ENCODE measurements at regions of chr9 and their contacts with region 1.

Region 1: GRCh38 chr9:19456996-19457692 is 48.3 kb downstream of the ACER2 start:
- DNase-seq: peak; percentile 18 to 70 (median 57)
- ATAC-seq: peak; percentile 92
- H3K4me3 ChIP-seq: no peak overlapping the region
- H3K4me3 Mint-ChIP-seq: peak overlapping the region in 7 of 10 donors; percentile 9 to 68 (median 48)
- H3K27ac ChIP-seq: no peak overlapping the region
- H3K27ac Mint-ChIP-seq: peak overlapping the region in 1 of 9 donors; percentile 22
- H3K4me1 ChIP-seq: peaks cover 0 to 9% of the 10 kb centered on the region in 2 donors
- H3K4me1 Mint-ChIP-seq: peaks cover 7 to 12% (median 8%) of the 10 kb centered on the region in 7 donors
- H3K27me3 ChIP-seq: no peaks in the 10 kb centered on the region
- H3K27me3 Mint-ChIP-seq: peaks cover 0 to 8% (median 0%) of the 10 kb centered on the region in 5 donors

Region 2: DNA sequence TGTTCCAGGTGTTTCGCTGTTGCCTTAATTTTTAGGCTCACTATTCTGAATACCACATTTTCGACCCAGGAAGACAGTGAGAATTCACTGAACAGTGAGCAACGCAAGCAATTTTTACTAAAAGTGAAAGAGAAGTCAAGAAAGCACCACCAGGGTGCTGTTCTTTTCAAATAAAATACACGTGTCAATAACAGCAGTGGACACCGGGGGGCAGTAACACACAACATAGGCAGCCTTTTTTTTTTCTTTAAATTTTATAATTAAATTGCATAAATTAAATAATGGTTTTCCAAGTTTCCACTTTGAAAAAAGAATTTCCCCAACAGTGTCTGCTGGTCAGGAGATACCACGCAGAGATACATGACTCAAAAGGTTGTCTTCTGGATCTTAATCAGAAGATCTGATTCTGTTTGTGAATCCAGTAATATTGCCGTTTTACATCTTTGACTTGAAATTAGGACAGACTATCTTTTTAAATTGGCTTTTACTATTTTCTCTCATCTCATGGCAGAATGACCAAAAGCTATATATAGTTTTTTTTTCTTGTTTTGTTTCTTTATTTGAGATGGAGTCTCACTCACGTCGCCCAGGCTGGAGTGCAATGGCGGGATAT is 1925.4 kb before region 1 on chr9:
- CTCF ChIA-PET with region 1: no interaction called
- POLR2A ChIA-PET with region 1: no interaction called
- intact Hi-C with region 1: loop called in 1 of 2 experiments (anchors 10 kb)
- DNase-seq: no peak
- ATAC-seq: no peak
- H3K4me3 ChIP-seq: no peak overlapping the region
- H3K4me3 Mint-ChIP-seq: no peak overlapping the region
- H3K27ac ChIP-seq: no peak overlapping the region
- H3K27ac Mint-ChIP-seq: no peak overlapping the region
- H3K4me1 ChIP-seq: no peaks in the 10 kb centered on the region
- H3K4me1 Mint-ChIP-seq: peaks cover 0 to 3% (median 0%) of the 10 kb centered on the region in 7 donors
- H3K27me3 ChIP-seq: no peaks in the 10 kb centered on the region
- H3K27me3 Mint-ChIP-seq: no peaks in the 10 kb centered on the region

Region 3: GRCh38 chr9:19028835-19029451 is 428.2 kb before region 1 on chr9:
- CTCF ChIA-PET with region 1: no interaction called
- POLR2A ChIA-PET with region 1: no interaction called
- intact Hi-C with region 1: loop called (anchors 1 to 2 kb)
- DNase-seq: peak in 5 of 9 donors; percentile 17 to 37 (median 34)
- ATAC-seq: peak; percentile 54
- H3K4me3 ChIP-seq: no peak overlapping the region
- H3K4me3 Mint-ChIP-seq: no peak overlapping the region
- H3K27ac ChIP-seq: no peak overlapping the region
- H3K27ac Mint-ChIP-seq: no peak overlapping the region
- H3K4me1 ChIP-seq: no peaks in the 10 kb centered on the region
- H3K4me1 Mint-ChIP-seq: peaks cover 0 to 8% (median 0%) of the 10 kb centered on the region in 7 donors
- H3K27me3 ChIP-seq: no peaks in the 10 kb centered on the region
- H3K27me3 Mint-ChIP-seq: peaks cover 11 to 19% (median 13%) of the 10 kb centered on the region in 5 donors

Region 4: DNA sequence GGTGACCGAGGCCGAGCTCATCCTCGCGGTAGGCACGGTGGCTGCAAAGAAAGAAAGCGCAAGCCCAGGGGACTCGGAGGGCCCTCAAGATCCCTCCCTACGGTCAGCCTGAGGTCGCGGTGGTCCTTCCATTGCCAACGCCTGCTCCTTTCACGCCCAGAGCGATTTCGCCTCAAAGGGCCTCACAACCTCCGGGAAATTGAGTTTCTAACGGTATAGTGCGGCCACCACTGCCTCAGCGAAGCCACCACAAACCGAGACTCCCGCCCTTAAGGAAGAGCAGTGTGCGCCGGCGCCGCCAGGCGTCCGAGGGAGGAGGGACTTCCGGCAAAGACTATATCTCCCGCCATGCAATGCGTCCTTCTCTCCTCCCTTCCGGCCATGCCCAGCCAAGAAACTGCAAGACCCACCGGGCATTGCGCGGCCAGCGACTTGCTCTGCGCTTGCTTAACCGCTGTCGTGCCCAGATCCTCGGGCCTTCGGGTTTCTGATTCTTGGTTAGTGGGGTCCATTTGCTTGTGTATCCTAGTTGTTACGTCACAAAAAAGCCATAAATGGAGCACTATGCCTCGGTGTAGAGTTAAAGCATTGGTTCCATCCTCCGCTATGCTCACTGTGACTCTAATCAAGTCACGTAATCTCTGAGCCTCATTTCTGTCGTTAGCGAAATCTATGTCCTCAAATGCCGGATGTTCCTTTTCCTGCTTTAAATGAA is 354.4 kb before region 1 on chr9 and contains the start of gene HAUS6:
- CTCF ChIA-PET with region 1: no interaction called
- POLR2A ChIA-PET with region 1: no interaction called
- intact Hi-C with region 1: loop called (anchors 1 kb)
- DNase-seq: peak; percentile 79 to 97 (median 95)
- ATAC-seq: peak; percentile 98
- H3K4me3 ChIP-seq: peak within 1 kb of the TSS; percentile 62
- H3K4me3 Mint-ChIP-seq: peak within 1 kb of the TSS; percentile 90 to 98 (median 94)
- H3K27ac ChIP-seq: peak within 1 kb of the TSS; percentile 86
- H3K27ac Mint-ChIP-seq: peak within 1 kb of the TSS; percentile 88 to 99 (median 96)
- H3K4me1 ChIP-seq: peaks cover 4 to 9% of the 10 kb centered on the region in 2 donors
- H3K4me1 Mint-ChIP-seq: peaks cover 13 to 43% (median 25%) of the 10 kb centered on the region in 7 donors
- H3K27me3 ChIP-seq: no peaks in the 10 kb centered on the region
- H3K27me3 Mint-ChIP-seq: no peaks in the 10 kb centered on the region
- total RNA-seq, gene HAUS6: 11.4 to 25.4 (median 19.6) TPM

Region 5: GRCh38 chr9:19230356-19231125 is 226.6 kb before region 1 on chr9 and contains the start of gene DENND4C:
- CTCF ChIA-PET with region 1: interaction called, 4 read pairs
- POLR2A ChIA-PET with region 1: no interaction called
- intact Hi-C with region 1: loop called (anchors 2 kb)
- DNase-seq: peak; percentile 60 to 86 (median 81)
- ATAC-seq: peak; percentile 84
- H3K4me3 ChIP-seq: peak within 1 kb of the TSS; percentile 61
- H3K4me3 Mint-ChIP-seq: peak within 1 kb of the TSS in 3 of 10 donors; percentile 81 to 84 (median 84)
- H3K27ac ChIP-seq: peak within 1 kb of the TSS; percentile 81
- H3K27ac Mint-ChIP-seq: peak within 1 kb of the TSS in 6 of 9 donors; percentile 65 to 94 (median 88)
- H3K4me1 ChIP-seq: peaks cover 11 to 22% of the 10 kb centered on the region in 2 donors
- H3K4me1 Mint-ChIP-seq: peaks cover 0 to 24% (median 20%) of the 10 kb centered on the region in 7 donors
- H3K27me3 ChIP-seq: no peaks in the 10 kb centered on the region
- H3K27me3 Mint-ChIP-seq: no peaks in the 10 kb centered on the region
- total RNA-seq, gene DENND4C: 43.5 to 77.5 (median 52.0) TPM

Region 6: GRCh38 chr9:19336166-19336565 is 121.0 kb before region 1 on chr9:
- CTCF ChIA-PET with region 1: no interaction called
- POLR2A ChIA-PET with region 1: no interaction called
- intact Hi-C with region 1: loop called in 1 of 2 experiments (anchors 5 kb)
- DNase-seq: no peak
- ATAC-seq: no peak
- H3K4me3 ChIP-seq: no peak overlapping the region
- H3K4me3 Mint-ChIP-seq: no peak overlapping the region
- H3K27ac ChIP-seq: no peak overlapping the region
- H3K27ac Mint-ChIP-seq: no peak overlapping the region
- H3K4me1 ChIP-seq: no peaks in the 10 kb centered on the region
- H3K4me1 Mint-ChIP-seq: peaks cover 0 to 3% (median 0%) of the 10 kb centered on the region in 7 donors
- H3K27me3 ChIP-seq: no peaks in the 10 kb centered on the region
- H3K27me3 Mint-ChIP-seq: no peaks in the 10 kb centered on the region

Region 7: DNA sequence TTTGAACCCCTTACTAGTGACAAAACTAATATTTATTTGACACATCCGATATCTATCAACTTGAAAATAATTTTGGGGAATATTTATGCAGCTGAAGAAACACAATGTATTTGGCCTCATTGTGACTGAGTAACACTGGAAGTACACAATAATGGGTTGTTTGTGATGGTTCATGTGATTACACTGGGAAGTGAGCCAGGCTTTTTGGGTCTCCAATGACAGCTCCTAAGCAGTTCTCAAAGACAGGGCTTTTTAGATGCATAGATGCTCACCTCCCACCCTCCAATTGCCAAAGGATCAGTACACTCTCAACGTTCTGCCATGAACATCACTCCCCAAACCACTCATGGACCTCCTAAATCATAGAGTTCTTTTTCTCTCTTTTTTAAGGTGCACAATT is 161.7 kb after region 1 on chr9:
- CTCF ChIA-PET with region 1: no interaction called
- POLR2A ChIA-PET with region 1: no interaction called
- intact Hi-C with region 1: no loop called
- DNase-seq: no peak
- ATAC-seq: no peak
- H3K4me3 ChIP-seq: no peak overlapping the region
- H3K4me3 Mint-ChIP-seq: no peak overlapping the region
- H3K27ac ChIP-seq: no peak overlapping the region
- H3K27ac Mint-ChIP-seq: no peak overlapping the region
- H3K4me1 ChIP-seq: no peaks in the 10 kb centered on the region
- H3K4me1 Mint-ChIP-seq: no peaks in the 10 kb centered on the region
- H3K27me3 ChIP-seq: no peaks in the 10 kb centered on the region
- H3K27me3 Mint-ChIP-seq: peaks cover 11 to 34% (median 23%) of the 10 kb centered on the region in 5 donors